ENCODE measurements at regions of chr13 and their contacts with region 1.

Region 1: DNA sequence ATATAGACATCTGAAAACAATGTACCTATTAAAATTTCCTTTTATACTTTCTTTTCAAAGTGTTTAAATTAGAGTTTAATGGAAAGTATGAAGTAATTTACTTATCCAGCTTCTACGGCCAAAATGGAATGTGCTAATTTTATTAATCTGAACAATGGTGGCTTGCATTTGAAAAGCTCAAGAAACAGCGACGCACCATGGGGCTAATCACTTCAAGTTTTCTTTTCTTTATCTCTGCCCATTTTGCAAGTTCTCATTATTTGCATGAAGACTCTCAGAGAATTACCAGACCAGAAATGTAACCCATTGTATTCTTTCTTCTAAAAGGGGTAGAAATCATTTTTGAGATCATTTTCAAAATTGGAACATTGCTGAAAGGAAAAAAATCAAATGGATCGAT is 204.0 kb upstream of the STARD13 start:
- DNase-seq: no peak
- ATAC-seq: no peak
- H3K4me3 ChIP-seq: no peak overlapping the region
- H3K27ac ChIP-seq: no peak overlapping the region
- H3K4me1 ChIP-seq: no peaks in the 10 kb centered on the region
- H3K27me3 ChIP-seq: no peaks in the 10 kb centered on the region
- CTCF ChIP-seq: no peak

Region 2: GRCh38 chr13:33383724-33384577 is 105.6 kb before region 1 on chr13:
- CTCF ChIA-PET with region 1: no interaction called
- POLR2A ChIA-PET with region 1: interaction called, 13 read pairs
- in situ Hi-C with region 1: no loop called
- intact Hi-C with region 1: no loop called
- DNase-seq: no peak
- ATAC-seq: no peak
- H3K4me3 ChIP-seq: no peak overlapping the region
- H3K27ac ChIP-seq: no peak overlapping the region
- H3K4me1 ChIP-seq: no peaks in the 10 kb centered on the region
- H3K27me3 ChIP-seq: no peaks in the 10 kb centered on the region
- CTCF ChIP-seq: no peak